Head of caudate nucleus (tissue), 42 donors: ENCODE measurements at regions of chr1 and their contacts with region 1.

Region 1: DNA sequence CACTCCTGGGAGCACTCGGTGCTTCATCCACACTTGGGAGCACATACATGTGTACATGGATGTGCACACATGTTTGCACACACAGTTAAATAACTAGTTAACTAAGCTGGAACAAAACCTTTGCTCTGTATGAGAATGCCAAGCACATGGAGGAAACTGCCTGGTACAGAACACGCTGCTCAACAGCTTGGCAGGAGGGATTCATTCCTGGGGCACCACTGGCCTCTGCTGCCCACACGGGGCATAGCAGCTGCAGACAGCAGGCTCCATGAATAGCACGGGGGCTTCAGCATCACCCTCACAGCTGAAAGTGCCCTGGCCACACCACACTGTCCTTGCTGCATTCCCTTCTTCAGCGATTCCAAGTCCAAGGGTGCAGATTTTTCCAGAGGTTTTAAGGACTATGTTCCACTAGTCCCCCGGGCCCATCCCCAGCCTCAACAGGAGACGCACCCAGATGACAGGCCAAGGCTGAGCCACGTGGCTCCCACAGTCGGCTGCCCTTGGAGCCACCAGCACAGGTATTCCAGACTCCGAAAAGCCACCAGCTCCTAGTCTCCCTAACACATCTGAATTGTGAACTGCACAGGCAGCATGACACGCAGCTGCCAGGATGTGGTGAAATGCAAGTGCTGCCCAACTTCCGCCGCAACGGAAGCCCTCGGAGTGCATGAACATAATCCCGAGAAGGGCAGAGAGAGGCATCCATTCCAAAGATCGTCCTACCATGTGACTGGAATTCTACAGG is 16.9 kb downstream of the NPHP4 start:
- DNase-seq: peak in 40 of 42 donors; percentile 50 to 86 (median 70)

Region 2: GRCh38 chr1:5514519-5515183 is 460.7 kb before region 1 on chr1:
- intact Hi-C with region 1: loop called (anchors 5 kb)
- DNase-seq: peak; percentile 59 to 93 (median 85)

Region 3: GRCh38 chr1:5830771-5831599 is 144.3 kb before region 1 on chr1:
- intact Hi-C with region 1: no loop called
- DNase-seq: peak in 22 of 42 donors; percentile 12 to 56 (median 36)